Caco-2 (cell line): ENCODE measurements at regions of chrX and their contacts with region 1.

Region 1: GRCh38 chrX:36867143-36867542 is 141.0 kb upstream of the FAM47C start:
- DNase-seq: peak in 1 of 2 experiments; percentile 13
- H3K4me3 ChIP-seq: no peak overlapping the region
- H3K4me3 Mint-ChIP-seq: no peak overlapping the region
- H3K27ac Mint-ChIP-seq: no peak overlapping the region
- H3K4me1 ChIP-seq: no peaks in the 10 kb centered on the region
- H3K4me1 Mint-ChIP-seq: no peaks in the 10 kb centered on the region
- H3K27me3 ChIP-seq: no peaks in the 10 kb centered on the region
- H3K27me3 Mint-ChIP-seq: peaks cover 2% of the 10 kb centered on the region
- CTCF ChIP-seq: peak; percentile 13 to 37

Region 2: DNA sequence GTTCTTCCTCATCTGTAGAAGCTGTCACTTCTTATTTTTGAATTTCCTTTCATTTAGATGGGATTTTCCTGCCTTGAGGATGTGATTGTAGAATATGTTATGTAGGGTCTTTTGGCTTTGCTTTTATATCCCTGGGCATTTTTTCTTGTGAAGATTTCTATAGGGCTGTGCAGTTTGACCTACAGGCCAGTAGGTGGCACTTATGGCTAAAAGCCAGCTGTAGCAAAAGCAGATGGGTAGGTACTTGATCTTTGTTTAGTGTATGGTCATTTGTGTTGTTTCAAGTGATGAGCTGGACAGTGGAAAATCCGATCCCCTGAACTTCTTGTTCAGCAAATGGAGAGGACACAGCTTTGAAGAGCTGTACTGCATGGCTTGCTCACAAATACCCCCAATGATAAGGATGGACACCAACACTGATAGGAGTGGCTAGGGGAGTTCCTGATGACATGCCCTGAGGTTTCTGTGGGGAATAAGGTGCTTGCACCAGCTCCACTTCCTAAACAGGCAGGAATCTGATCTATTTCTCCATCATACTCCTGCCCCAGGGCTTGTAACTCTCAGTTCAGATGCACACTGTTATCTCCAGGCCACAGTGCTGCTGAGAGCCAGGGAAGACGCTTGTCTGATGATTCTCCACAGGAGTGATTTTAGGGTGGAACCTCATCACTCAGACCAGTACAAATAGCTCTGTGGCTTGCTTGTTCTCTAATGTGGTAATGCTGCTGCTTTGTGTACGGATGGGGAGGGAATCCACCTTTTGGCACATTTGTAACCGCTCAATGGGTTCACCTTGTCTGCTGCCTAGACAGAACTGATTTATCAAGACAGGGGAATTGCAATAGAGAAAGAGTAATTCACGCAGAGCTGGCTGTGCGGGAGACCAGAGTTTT is 1486.1 kb before region 1 on chrX:
- CTCF ChIA-PET with region 1: no interaction called
- POLR2A ChIA-PET with region 1: no interaction called
- intact Hi-C with region 1: loop called (anchors 10 kb)
- DNase-seq: peak in 1 of 2 experiments; percentile 6
- H3K4me3 ChIP-seq: no peak overlapping the region
- H3K4me3 Mint-ChIP-seq: no peak overlapping the region
- H3K27ac Mint-ChIP-seq: no peak overlapping the region
- H3K4me1 ChIP-seq: no peaks in the 10 kb centered on the region
- H3K4me1 Mint-ChIP-seq: no peaks in the 10 kb centered on the region
- H3K27me3 ChIP-seq: no peaks in the 10 kb centered on the region
- H3K27me3 Mint-ChIP-seq: peaks cover 2% of the 10 kb centered on the region
- CTCF ChIP-seq: peak; percentile 34 to 62

Region 3: DNA sequence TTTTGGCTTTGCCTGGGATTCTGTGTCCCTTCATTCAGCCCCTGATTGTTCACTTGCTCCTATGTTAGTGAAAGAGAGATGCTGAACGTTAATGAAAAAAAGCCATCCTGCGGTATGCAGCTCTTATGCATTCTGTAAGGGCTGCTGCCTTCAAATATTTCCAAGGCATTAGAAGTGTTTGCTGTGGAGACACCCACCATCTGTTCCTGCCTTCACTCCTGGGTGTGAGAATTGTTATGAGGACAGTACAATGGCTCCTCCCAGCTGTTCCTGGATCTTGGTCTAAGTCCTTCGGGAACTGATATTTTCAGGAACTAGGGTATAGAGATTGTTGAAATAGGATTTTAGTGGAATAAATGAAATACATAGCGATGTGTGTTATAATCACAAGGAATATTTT is 286.1 kb before region 1 on chrX:
- CTCF ChIA-PET with region 1: no interaction called
- POLR2A ChIA-PET with region 1: no interaction called
- intact Hi-C with region 1: no loop called
- DNase-seq: no peak
- H3K4me3 ChIP-seq: no peak overlapping the region
- H3K4me3 Mint-ChIP-seq: no peak overlapping the region
- H3K27ac Mint-ChIP-seq: no peak overlapping the region
- H3K4me1 ChIP-seq: no peaks in the 10 kb centered on the region
- H3K4me1 Mint-ChIP-seq: no peaks in the 10 kb centered on the region
- H3K27me3 ChIP-seq: no peaks in the 10 kb centered on the region
- H3K27me3 Mint-ChIP-seq: no peaks in the 10 kb centered on the region
- CTCF ChIP-seq: no peak

Region 4: DNA sequence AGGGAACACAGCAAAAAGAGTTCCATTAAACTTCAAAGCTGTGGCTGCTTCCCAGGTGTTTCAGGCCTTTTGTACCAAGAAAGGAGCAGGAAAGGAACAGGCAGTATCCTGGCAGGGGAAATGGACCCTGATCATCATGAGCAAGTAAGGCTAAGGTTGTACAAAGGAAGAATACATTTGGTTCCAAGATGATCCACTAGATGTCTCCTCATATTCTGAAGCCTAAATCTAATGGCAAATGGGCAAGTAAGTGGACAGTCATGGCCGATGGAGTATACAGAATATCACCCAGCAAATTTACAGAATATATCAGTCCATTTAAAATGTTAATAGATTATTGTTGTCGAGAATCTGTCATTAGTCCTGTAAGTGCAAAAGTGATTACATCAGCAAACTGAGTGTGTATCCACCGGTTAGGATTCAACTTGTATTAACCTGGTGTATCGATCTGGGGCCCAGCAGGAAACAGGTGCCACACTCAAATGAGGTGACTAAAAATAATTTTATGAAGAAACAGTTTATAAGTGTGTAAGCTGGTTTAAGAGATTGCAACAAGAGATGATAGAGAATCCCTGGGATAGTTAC is 227.0 kb before region 1 on chrX:
- CTCF ChIA-PET with region 1: no interaction called
- POLR2A ChIA-PET with region 1: no interaction called
- intact Hi-C with region 1: loop called (anchors 1 kb)
- DNase-seq: no peak
- H3K4me3 ChIP-seq: no peak overlapping the region
- H3K4me3 Mint-ChIP-seq: no peak overlapping the region
- H3K27ac Mint-ChIP-seq: no peak overlapping the region
- H3K4me1 ChIP-seq: no peaks in the 10 kb centered on the region
- H3K4me1 Mint-ChIP-seq: no peaks in the 10 kb centered on the region
- H3K27me3 ChIP-seq: no peaks in the 10 kb centered on the region
- H3K27me3 Mint-ChIP-seq: no peaks in the 10 kb centered on the region
- CTCF ChIP-seq: peak in 1 of 2 experiments; percentile 13

Region 5: DNA sequence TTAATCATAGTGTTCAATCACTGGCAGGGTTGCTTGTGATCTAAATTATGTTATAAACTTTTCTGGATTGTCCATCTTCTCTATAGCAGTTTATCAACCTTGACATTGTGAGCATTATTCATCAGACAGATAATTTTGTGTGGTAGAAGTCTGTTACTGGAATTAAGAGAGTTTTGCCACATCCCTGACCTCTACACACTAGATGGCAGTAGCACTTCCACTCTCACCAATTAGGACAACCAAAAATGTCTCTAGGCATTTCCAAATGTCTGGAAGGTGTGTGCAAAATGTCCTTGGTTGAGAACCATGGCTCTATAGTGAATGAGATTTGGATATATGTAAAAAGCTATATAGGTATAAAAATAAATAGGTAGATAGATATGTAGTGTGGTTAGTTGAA is 183.1 kb before region 1 on chrX:
- CTCF ChIA-PET with region 1: no interaction called
- POLR2A ChIA-PET with region 1: no interaction called
- intact Hi-C with region 1: loop called (anchors 1 kb)
- DNase-seq: no peak
- H3K4me3 ChIP-seq: no peak overlapping the region
- H3K4me3 Mint-ChIP-seq: no peak overlapping the region
- H3K27ac Mint-ChIP-seq: no peak overlapping the region
- H3K4me1 ChIP-seq: no peaks in the 10 kb centered on the region
- H3K4me1 Mint-ChIP-seq: no peaks in the 10 kb centered on the region
- H3K27me3 ChIP-seq: no peaks in the 10 kb centered on the region
- H3K27me3 Mint-ChIP-seq: peaks cover 4% of the 10 kb centered on the region
- CTCF ChIP-seq: peak in 1 of 2 experiments; percentile 8